ENCODE measurements at regions of chr10 and their contacts with region 1.

Region 1: GRCh38 chr10:16986406-16987205 is 143.0 kb downstream of the CUBN start:
- DNase-seq: no peak
- ATAC-seq: peak in 7 of 8 donors; percentile 47 to 71 (median 61)
- H3K4me3 ChIP-seq: no peak overlapping the region
- H3K27ac ChIP-seq: peak overlapping the region; percentile 37 to 81 (median 72)
- H3K4me1 ChIP-seq: peaks cover 0 to 25% (median 16%) of the 10 kb centered on the region in 9 donors
- H3K27me3 ChIP-seq: no peaks in the 10 kb centered on the region
- CTCF ChIP-seq: no peak

Region 2: GRCh38 chr10:16765509-16766375 is 220.9 kb before region 1 on chr10:
- intact Hi-C with region 1: no loop called
- DNase-seq: no peak
- ATAC-seq: no peak
- H3K4me3 ChIP-seq: no peak overlapping the region
- H3K27ac ChIP-seq: no peak overlapping the region
- H3K4me1 ChIP-seq: peaks cover 0 to 28% (median 7%) of the 10 kb centered on the region in 9 donors
- H3K27me3 ChIP-seq: no peaks in the 10 kb centered on the region
- CTCF ChIP-seq: no peak

Region 3: GRCh38 chr10:16944402-16944801 is 42.2 kb before region 1 on chr10:
- intact Hi-C with region 1: loop called in 1 of 10 experiments (anchors 5 kb)
- DNase-seq: peak in 1 of 2 donors; percentile 15
- ATAC-seq: peak in 7 of 8 donors; percentile 57 to 90 (median 83)
- H3K4me3 ChIP-seq: no peak overlapping the region
- H3K27ac ChIP-seq: peak overlapping the region in 8 of 10 donors; percentile 14 to 63 (median 45)
- H3K4me1 ChIP-seq: peaks cover 0 to 31% (median 0%) of the 10 kb centered on the region in 9 donors
- H3K27me3 ChIP-seq: no peaks in the 10 kb centered on the region
- CTCF ChIP-seq: no peak

Region 4: GRCh38 chr10:16950656-16951601 is 35.7 kb before region 1 on chr10:
- intact Hi-C with region 1: loop called in 2 of 10 experiments (anchors 5 kb)
- DNase-seq: no peak
- ATAC-seq: peak in 2 of 8 donors; percentile 44 to 61
- H3K4me3 ChIP-seq: no peak overlapping the region
- H3K27ac ChIP-seq: peak overlapping the region in 5 of 10 donors; percentile 6 to 71 (median 41)
- H3K4me1 ChIP-seq: peaks cover 3 to 46% (median 24%) of the 10 kb centered on the region in 9 donors
- H3K27me3 ChIP-seq: no peaks in the 10 kb centered on the region
- CTCF ChIP-seq: no peak

Region 5: GRCh38 chr10:17290226-17290625 is 303.6 kb after region 1 on chr10:
- intact Hi-C with region 1: no loop called
- DNase-seq: no peak
- ATAC-seq: no peak
- H3K4me3 ChIP-seq: no peak overlapping the region
- H3K27ac ChIP-seq: no peak overlapping the region
- H3K4me1 ChIP-seq: no peaks in the 10 kb centered on the region
- H3K27me3 ChIP-seq: peaks cover 0 to 30% (median 5%) of the 10 kb centered on the region in 7 donors
- CTCF ChIP-seq: peak in 4 of 9 donors; percentile 22 to 44 (median 30)